Panc1 (cell line): ENCODE measurements at regions of chr14 and their contacts with region 1.

Region 1: DNA sequence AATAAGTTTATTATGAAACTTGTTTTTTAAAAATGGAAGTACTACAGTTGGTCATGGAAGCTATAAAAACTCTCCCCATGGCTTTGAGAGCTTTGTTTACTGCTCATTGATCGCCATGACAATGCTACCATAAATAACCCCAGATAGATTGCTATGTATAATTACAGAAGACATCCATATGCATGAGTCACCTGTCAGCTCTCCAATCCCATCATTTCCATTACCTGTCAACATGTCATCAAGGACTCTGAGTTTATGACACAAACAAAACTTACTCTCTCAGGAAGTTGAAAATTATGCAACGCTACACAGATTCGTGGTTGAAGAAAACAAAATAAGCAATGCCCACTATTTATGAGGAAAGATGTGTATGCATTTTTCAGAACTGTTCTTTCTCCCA is 144.4 kb downstream of the SEC23A start:
- DNase-seq: no peak
- ATAC-seq: no peak
- H3K4me3 ChIP-seq: no peak overlapping the region
- H3K27ac ChIP-seq: no peak overlapping the region
- H3K4me1 ChIP-seq: no peaks in the 10 kb centered on the region
- H3K27me3 ChIP-seq: no peaks in the 10 kb centered on the region
- CTCF ChIP-seq: no peak

Region 2: DNA sequence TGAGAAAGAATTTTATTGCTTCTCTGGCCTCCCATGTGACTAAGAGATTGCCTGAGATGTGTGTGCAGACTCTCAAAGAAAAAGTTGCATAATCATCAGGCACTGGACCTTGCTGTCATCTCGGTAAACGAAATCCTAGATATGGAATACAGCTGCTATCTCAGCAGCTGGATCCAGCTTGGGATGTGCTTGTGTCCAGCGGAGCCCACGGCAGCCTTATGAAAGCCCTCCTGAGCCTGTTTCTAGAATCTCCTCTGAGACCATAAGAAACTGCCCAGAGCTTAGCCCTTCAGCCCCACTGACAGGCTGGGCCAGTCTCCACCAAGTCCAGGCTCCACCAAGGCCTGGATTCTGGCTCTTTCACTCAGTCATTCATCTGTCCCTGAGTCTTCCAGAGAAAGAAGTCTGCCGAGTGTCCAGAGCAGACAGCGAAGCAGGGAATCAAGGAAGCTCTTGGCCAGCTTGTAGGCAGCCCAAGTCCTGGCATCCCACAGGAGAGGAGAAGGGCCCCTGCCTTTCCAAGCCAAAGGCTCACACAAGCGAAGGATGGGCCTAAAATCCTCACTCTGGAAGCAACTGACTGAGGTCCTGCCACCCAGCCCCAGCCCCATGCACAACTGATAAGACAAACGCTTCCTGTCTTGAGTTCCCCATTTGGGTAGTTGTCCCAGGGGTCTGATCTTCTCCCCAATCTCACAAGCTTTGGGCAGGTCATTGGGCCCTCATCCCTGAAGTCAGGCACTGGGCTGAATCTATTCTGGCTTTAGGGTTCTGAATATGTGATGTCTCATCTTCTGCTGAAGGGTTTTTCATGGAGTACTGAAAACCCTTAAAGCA is 46.7 kb after region 1 on chr14:
- CTCF ChIA-PET with region 1: no interaction called
- POLR2A ChIA-PET with region 1: no interaction called
- in situ Hi-C with region 1: no loop called
- intact Hi-C with region 1: loop called (anchors 2 kb)
- DNase-seq: no peak
- ATAC-seq: no peak
- H3K4me3 ChIP-seq: no peak overlapping the region
- H3K27ac ChIP-seq: no peak overlapping the region
- H3K4me1 ChIP-seq: no peaks in the 10 kb centered on the region
- H3K27me3 ChIP-seq: no peaks in the 10 kb centered on the region
- CTCF ChIP-seq: no peak